Activated CD8-positive, alpha-beta T cell treated with anti-CD3 and anti-CD28 coated beads for 36 hours (primary cell): ENCODE measurements at regions of chr10 and their contacts with region 1.

Region 1: GRCh38 chr10:6678211-6678803 is 98.2 kb upstream of the PRKCQ start:
- DNase-seq: peak; percentile 80
- ATAC-seq: peak; percentile 47
- H3K4me3 Mint-ChIP-seq: no peak overlapping the region
- H3K27ac Mint-ChIP-seq: no peak overlapping the region
- H3K4me1 Mint-ChIP-seq: peaks cover 4% of the 10 kb centered on the region
- H3K27me3 Mint-ChIP-seq: peaks cover 17% of the 10 kb centered on the region
- CTCF ChIP-seq: peak; percentile 80

Region 2: DNA sequence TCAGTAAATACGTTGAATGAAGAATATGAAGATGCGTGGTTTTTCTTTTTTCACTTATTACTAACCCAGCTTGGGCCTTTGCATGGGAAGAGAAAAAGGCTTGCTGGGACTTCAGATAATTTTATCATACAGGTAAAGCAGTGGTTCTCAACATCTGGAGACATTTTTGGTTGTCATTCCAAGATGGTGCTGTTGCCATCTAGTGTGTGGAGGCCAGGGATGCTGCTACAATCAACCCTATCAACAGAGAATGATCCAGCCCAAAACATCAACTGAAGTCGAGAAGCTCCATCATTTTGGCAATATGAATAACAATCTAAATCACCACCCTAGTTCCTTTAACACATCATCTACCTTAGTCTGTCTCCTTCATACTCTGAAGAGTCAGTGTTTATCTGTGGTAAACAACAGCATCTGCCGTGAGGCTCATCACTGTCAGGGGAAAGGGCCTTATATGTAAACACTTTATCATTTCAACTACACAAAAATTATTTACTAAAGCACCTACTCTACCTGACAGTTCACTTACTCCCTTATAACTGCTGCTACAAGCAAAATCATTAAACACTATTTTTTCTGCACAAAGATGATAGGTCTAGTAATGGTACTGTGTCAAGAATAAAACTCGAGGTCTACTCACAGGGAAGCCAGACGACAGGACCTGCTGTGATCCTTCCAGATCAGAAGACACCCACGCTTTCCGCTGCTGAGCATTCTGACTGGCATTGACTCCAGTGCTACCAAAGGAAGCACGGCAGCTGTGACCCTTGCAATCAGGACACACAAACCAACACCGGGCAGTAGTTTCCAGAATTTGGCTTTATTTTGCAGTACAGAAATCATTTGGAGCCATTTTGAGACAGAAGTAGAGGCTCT is 913.6 kb before region 1 on chr10:
- CTCF ChIA-PET with region 1: no interaction called
- POLR2A ChIA-PET with region 1: no interaction called
- intact Hi-C with region 1: no loop called
- DNase-seq: no peak
- ATAC-seq: no peak
- H3K4me3 Mint-ChIP-seq: no peak overlapping the region
- H3K27ac Mint-ChIP-seq: peak overlapping the region; percentile 35
- H3K4me1 Mint-ChIP-seq: no peaks in the 10 kb centered on the region
- H3K27me3 Mint-ChIP-seq: no peaks in the 10 kb centered on the region
- CTCF ChIP-seq: no peak

Region 3: DNA sequence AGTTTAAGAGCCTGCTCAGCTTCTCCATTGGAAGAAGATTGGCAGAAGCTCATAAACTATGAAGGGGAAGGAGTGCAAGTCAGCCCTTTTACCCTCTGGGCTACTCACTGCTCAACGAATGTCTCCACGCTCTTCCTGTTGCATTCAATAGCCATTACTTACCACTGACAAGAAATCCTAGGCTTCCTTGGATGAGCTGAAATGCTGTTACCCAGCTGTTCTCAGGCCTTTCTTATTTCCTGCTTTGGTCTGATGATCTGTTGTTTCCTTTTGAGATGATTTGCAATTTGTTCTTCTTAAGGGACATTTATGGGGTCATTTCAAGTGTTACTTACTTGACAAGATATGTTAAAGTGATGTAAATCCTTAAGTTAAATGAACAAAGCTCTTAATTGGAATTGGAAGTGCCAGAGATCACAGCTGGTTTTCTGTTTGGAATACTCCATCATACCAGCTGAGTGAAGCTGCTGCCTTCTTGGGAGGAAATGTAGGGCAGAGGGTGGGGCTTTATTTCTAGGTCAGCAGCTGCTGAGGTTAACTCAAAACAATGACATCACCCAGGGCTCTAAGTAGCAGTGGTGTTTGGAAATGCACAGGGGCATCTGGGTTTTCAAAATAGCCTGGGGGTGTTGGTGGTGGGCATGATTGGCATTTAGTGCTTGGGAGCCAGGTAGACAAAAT is 268.2 kb before region 1 on chr10:
- CTCF ChIA-PET with region 1: interaction called, 61 read pairs
- POLR2A ChIA-PET with region 1: no interaction called
- intact Hi-C with region 1: no loop called
- DNase-seq: peak; percentile 54
- ATAC-seq: peak; percentile 77
- H3K4me3 Mint-ChIP-seq: peak overlapping the region; percentile 26
- H3K27ac Mint-ChIP-seq: peak overlapping the region; percentile 71
- H3K4me1 Mint-ChIP-seq: peaks cover 47% of the 10 kb centered on the region
- H3K27me3 Mint-ChIP-seq: no peaks in the 10 kb centered on the region
- CTCF ChIP-seq: no peak

Region 4: DNA sequence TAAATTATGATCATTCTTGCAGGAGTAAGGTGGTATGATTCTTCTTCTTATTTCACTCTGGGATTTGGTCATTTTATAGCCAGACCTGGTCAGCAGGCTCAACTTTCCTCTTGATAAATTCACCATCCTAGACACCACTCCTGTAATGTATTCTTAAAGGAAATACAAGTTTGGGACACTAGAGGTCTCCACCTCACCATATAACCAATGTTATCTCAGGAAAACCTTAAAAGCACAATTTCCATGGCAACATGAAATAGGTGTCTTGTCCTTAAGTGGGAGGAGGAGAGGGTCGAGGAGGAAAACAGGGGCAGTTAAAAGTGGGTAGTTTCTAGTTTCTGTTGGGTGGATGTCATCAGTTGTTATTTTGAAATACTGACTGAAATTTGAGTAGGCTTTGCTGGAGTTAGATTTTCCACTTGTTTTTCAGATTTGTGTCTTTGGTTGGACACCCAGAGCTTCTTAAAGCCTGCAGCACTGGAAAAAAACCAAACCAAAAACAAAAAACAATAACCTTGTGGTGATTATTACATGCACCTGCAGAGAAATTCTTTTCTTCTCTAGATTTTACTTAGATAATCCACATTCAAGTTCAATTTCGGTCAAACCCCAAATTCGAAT is 261.3 kb before region 1 on chr10:
- CTCF ChIA-PET with region 1: interaction called, 61 read pairs
- POLR2A ChIA-PET with region 1: no interaction called
- intact Hi-C with region 1: no loop called
- DNase-seq: no peak
- ATAC-seq: peak; percentile 82
- H3K4me3 Mint-ChIP-seq: no peak overlapping the region
- H3K27ac Mint-ChIP-seq: no peak overlapping the region
- H3K4me1 Mint-ChIP-seq: peaks cover 1% of the 10 kb centered on the region
- H3K27me3 Mint-ChIP-seq: no peaks in the 10 kb centered on the region
- CTCF ChIP-seq: peak; percentile 83

Region 5: GRCh38 chr10:6688661-6689435 is 10.5 kb after region 1 on chr10:
- CTCF ChIA-PET with region 1: interaction called, 14 read pairs
- POLR2A ChIA-PET with region 1: no interaction called
- intact Hi-C with region 1: no loop called
- DNase-seq: no peak
- ATAC-seq: no peak
- H3K4me3 Mint-ChIP-seq: no peak overlapping the region
- H3K27ac Mint-ChIP-seq: no peak overlapping the region
- H3K4me1 Mint-ChIP-seq: no peaks in the 10 kb centered on the region
- H3K27me3 Mint-ChIP-seq: peaks cover 7% of the 10 kb centered on the region
- CTCF ChIP-seq: no peak